ENCODE measurements at regions of chr5 and their contacts with region 1.

Region 1: DNA sequence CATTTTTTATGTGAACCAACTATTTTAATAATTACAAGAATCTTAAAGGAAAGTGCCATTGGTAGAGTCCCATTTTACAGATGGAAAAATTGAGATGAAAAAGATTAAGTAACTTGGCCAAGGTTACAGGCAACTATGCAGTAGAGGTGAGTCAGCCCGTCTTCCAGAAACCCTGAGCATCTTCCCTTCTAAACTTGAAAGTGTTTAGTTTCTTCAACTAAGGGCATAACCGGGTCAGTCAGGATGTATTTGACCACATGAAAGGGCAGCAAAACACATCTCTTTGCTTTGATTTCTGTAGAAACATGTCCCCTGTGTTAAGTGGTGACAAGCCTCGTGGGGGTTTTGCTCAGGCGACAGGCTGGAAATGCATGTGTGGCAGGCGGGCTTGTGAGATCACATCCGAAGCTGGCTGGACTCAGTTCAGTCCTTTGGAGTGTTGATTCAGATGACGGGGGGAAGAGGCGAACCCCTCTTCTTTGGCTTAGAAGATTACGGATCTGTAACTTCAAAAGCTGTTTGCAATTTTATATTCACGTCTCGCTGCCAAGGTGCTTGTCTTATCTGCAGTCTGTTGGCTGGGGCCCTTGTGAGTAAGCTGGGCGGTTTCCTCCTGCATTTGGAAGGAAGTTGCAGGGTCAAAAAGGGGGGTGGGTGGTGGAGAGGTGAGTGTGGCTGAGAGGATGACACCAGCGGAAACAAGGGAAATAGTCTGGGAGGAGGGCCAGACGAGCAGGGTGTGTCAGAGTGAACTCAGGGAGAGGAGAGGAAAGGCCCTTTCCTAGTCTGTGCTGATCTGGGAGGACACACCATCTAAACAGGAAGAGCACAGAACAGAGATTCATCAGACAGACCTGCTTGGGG is 78.9 kb upstream of the RPS23 start:
- DNase-seq: peak; percentile 91
- H3K4me3 ChIP-seq: no peak overlapping the region
- H3K27ac ChIP-seq: peak overlapping the region; percentile 73
- H3K4me1 ChIP-seq: peaks cover 42% of the 10 kb centered on the region
- H3K27me3 ChIP-seq: no peaks in the 10 kb centered on the region
- CTCF ChIP-seq: no peak
- POLR2A ChIP-seq: peak; percentile 45

Region 2: GRCh38 chr5:82346399-82347165 is 10.5 kb before region 1 on chr5:
- CTCF ChIA-PET with region 1: no interaction called
- POLR2A ChIA-PET with region 1: no interaction called
- dilution Hi-C with region 1: no loop called
- intact Hi-C with region 1: no loop called
- DNase-seq: no peak
- H3K4me3 ChIP-seq: no peak overlapping the region
- H3K27ac ChIP-seq: no peak overlapping the region
- H3K4me1 ChIP-seq: no peaks in the 10 kb centered on the region
- H3K27me3 ChIP-seq: peaks cover 0 to 5% of the 10 kb centered on the region in 2 experiments
- CTCF ChIP-seq: no peak
- POLR2A ChIP-seq: no peak

Region 3: GRCh38 chr5:82387001-82387818 is 30.2 kb after region 1 on chr5:
- CTCF ChIA-PET with region 1: interaction called, 6 read pairs
- POLR2A ChIA-PET with region 1: no interaction called
- dilution Hi-C with region 1: no loop called
- intact Hi-C with region 1: loop called (anchors 1 kb)
- DNase-seq: peak; percentile 99
- H3K4me3 ChIP-seq: no peak overlapping the region
- H3K27ac ChIP-seq: peak overlapping the region; percentile 59
- H3K4me1 ChIP-seq: peaks cover 39% of the 10 kb centered on the region
- H3K27me3 ChIP-seq: no peaks in the 10 kb centered on the region
- CTCF ChIP-seq: no peak
- POLR2A ChIP-seq: no peak

Region 4: DNA sequence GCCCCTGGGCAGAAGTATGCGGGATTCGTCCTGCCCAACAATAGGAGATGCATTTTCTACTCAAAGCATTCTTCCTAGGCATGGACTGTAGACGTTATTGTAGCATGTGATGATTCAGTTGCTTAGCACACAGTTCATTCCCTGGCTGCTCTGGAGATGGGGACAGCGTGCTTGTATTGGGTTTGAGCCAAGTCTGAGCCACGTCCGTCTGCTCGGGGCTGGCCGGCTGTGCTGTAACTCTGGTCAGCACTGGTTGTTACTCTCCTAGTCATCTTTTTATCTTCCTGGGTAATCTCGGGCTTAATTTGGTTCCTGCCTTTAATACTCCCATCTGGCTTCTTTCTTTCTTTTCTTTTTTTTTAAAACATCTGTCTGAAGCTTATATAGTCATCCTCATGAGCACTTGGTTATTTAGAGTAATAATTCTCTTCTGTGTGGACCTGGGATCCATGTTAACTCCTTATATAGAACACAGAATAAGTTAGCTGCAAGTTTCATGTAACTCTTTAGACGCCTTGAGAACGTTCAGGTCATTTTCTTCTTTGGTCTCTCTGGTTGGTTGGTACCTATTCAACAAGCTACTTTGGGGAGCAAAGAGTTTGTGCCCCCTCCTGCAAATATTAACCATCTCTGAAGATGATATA is 40.0 kb after region 1 on chr5:
- CTCF ChIA-PET with region 1: interaction called, 3 read pairs
- POLR2A ChIA-PET with region 1: no interaction called
- dilution Hi-C with region 1: no loop called
- intact Hi-C with region 1: loop called (anchors 1 kb)
- DNase-seq: peak; percentile 98
- H3K4me3 ChIP-seq: no peak overlapping the region
- H3K27ac ChIP-seq: peak overlapping the region; percentile 82
- H3K4me1 ChIP-seq: peaks cover 18% of the 10 kb centered on the region
- H3K27me3 ChIP-seq: no peaks in the 10 kb centered on the region
- CTCF ChIP-seq: no peak
- POLR2A ChIP-seq: no peak

Region 5: DNA sequence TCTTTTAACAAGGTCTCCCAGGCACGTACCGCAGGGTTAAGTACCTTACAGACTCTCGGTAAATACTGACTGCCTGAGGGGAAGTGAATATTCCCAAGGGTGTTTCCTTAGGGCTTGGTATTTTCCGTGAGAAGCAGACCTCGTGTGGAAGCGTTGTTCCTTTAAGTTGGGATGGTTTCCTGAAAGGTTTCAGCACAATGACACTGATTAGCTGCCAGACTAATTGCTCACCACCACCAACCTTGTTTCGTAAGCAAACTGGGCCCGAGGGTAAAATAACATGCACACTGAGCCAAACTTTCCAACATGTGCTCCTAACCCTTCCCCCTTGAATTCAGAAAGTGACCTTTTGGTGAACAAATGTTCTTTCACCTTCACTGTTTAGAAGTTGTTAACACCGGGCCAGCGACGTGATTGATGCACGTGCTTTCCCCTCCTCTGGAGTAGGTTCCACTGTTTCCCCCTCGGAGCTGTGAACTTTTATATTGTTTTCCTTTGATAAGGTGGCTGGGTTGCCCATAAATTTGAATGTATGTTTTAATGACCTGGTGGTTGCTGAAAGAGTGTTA is 49.2 kb after region 1 on chr5:
- CTCF ChIA-PET with region 1: interaction called, 4 read pairs
- POLR2A ChIA-PET with region 1: no interaction called
- dilution Hi-C with region 1: no loop called
- intact Hi-C with region 1: loop called (anchors 1 kb)
- DNase-seq: peak; percentile 100
- H3K4me3 ChIP-seq: peak overlapping the region in 1 of 3 experiments; percentile 1
- H3K27ac ChIP-seq: peak overlapping the region; percentile 99
- H3K4me1 ChIP-seq: peaks cover 28% of the 10 kb centered on the region
- H3K27me3 ChIP-seq: no peaks in the 10 kb centered on the region
- CTCF ChIP-seq: no peak
- POLR2A ChIP-seq: peak; percentile 65

Region 6: GRCh38 chr5:82635561-82636288 is 278.7 kb after region 1 on chr5:
- CTCF ChIA-PET with region 1: interaction called, 5 read pairs
- POLR2A ChIA-PET with region 1: no interaction called
- dilution Hi-C with region 1: no loop called
- intact Hi-C with region 1: loop called (anchors 2 kb)
- DNase-seq: peak; percentile 44
- H3K4me3 ChIP-seq: no peak overlapping the region
- H3K27ac ChIP-seq: no peak overlapping the region
- H3K4me1 ChIP-seq: peaks cover 5% of the 10 kb centered on the region
- H3K27me3 ChIP-seq: no peaks in the 10 kb centered on the region
- CTCF ChIP-seq: no peak
- POLR2A ChIP-seq: no peak